ENCODE measurements at regions of chr6 and their contacts with region 1.

Region 1: GRCh38 chr6:30238174-30238795 is 25.1 kb upstream of the TRIM26 start:
- DNase-seq: peak; percentile 22
- ATAC-seq: peak; percentile 95
- H3K4me3 ChIP-seq: no peak overlapping the region
- H3K27ac ChIP-seq: no peak overlapping the region
- H3K4me1 ChIP-seq: no peaks in the 10 kb centered on the region
- H3K27me3 ChIP-seq: peaks cover 23% of the 10 kb centered on the region
- CTCF ChIP-seq: peak; percentile 83

Region 2: GRCh38 chr6:30396833-30397479 is 158.7 kb after region 1 on chr6:
- CTCF ChIA-PET with region 1: interaction called, 6 read pairs
- POLR2A ChIA-PET with region 1: no interaction called
- in situ Hi-C with region 1: no loop called
- intact Hi-C with region 1: loop called (anchors 5 kb)
- DNase-seq: peak; percentile 33
- ATAC-seq: peak; percentile 99
- H3K4me3 ChIP-seq: no peak overlapping the region
- H3K27ac ChIP-seq: no peak overlapping the region
- H3K4me1 ChIP-seq: no peaks in the 10 kb centered on the region
- H3K27me3 ChIP-seq: peaks cover 16% of the 10 kb centered on the region
- CTCF ChIP-seq: peak; percentile 96

Region 3: GRCh38 chr6:30742316-30743098 is 504.2 kb after region 1 on chr6 and contains the start of gene FLOT1:
- CTCF ChIA-PET with region 1: no interaction called
- POLR2A ChIA-PET with region 1: no interaction called
- in situ Hi-C with region 1: no loop called
- intact Hi-C with region 1: no loop called
- DNase-seq: peak; percentile 85
- ATAC-seq: peak; percentile 80
- H3K4me3 ChIP-seq: peak within 1 kb of the TSS; percentile 81 to 85
- H3K27ac ChIP-seq: peak within 1 kb of the TSS; percentile 97
- H3K4me1 ChIP-seq: peaks cover 39% of the 10 kb centered on the region
- H3K27me3 ChIP-seq: no peaks in the 10 kb centered on the region
- CTCF ChIP-seq: no peak
- total RNA-seq, gene FLOT1: 176 TPM